A549 (cell line): ENCODE measurements at regions of chr19 and their contacts with region 1.

Region 1: GRCh38 chr19:47848823-47849473 is 10.1 kb upstream of the TPRX2 start:
- DNase-seq: peak; percentile 47 to 82
- ATAC-seq: peak; percentile 65 to 73; a peak in 5 of 6 replicates
- H3K4me3 ChIP-seq: peak overlapping the region; percentile 36
- H3K27ac ChIP-seq: peak overlapping the region in 1 of 2 experiments; percentile 80; a peak in 3 of 6 replicates
- H3K4me1 ChIP-seq: no peaks in the 10 kb centered on the region
- CTCF ChIP-seq: peak; percentile 97
- EP300 ChIP-seq: no peak
- POLR2A ChIP-seq: no peak
- RAD21 ChIP-seq: peak; percentile 32 to 33; a peak in 4 of 5 replicates

Region 2: DNA sequence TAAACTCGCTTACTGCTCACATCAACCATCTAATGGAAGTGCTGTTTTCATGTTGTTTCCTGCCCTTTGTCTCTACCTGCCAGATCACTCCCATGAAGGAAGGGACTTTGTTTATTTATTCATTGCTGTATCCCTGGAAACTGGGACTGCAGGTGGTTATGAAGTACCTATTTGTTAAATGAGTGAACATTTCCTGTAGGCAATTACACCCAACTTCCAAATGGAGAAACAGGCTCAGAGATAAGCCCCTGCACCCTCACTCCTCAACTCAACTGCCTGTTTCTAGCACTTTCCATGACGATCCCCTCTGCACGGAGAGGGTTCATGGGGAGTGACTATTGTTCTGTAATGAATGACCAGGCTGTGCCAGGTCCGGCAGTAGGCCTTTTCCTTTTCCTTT is 72.4 kb before region 1 on chr19:
- CTCF ChIA-PET with region 1: no interaction called
- POLR2A ChIA-PET with region 1: no interaction called
- DNase-seq: peak in 1 of 2 experiments; percentile 61
- ATAC-seq: no peak
- H3K4me3 ChIP-seq: no peak overlapping the region
- H3K27ac ChIP-seq: no peak overlapping the region
- H3K4me1 ChIP-seq: peaks cover 16% of the 10 kb centered on the region
- CTCF ChIP-seq: no peak
- EP300 ChIP-seq: no peak
- POLR2A ChIP-seq: no peak
- RAD21 ChIP-seq: no peak

Region 3: GRCh38 chr19:47813304-47814004 is 35.5 kb before region 1 on chr19:
- CTCF ChIA-PET with region 1: interaction called, 20 read pairs
- POLR2A ChIA-PET with region 1: no interaction called
- DNase-seq: peak; percentile 70 to 85
- ATAC-seq: peak; percentile 95 to 97
- H3K4me3 ChIP-seq: no peak overlapping the region
- H3K27ac ChIP-seq: no peak overlapping the region
- H3K4me1 ChIP-seq: no peaks in the 10 kb centered on the region; the same call in 2 of the 3 replicates
- CTCF ChIP-seq: peak; percentile 80
- EP300 ChIP-seq: no peak
- POLR2A ChIP-seq: no peak
- RAD21 ChIP-seq: peak; percentile 54 to 63

Region 4: GRCh38 chr19:47824396-47824795 is 24.6 kb before region 1 on chr19:
- CTCF ChIA-PET with region 1: interaction called, 25 read pairs
- POLR2A ChIA-PET with region 1: no interaction called
- DNase-seq: no peak
- ATAC-seq: peak in 1 of 2 experiments; percentile 26; a peak in 1 of 6 replicates
- H3K4me3 ChIP-seq: no peak overlapping the region
- H3K27ac ChIP-seq: no peak overlapping the region
- H3K4me1 ChIP-seq: no peaks in the 10 kb centered on the region
- CTCF ChIP-seq: no peak
- EP300 ChIP-seq: no peak
- POLR2A ChIP-seq: no peak
- RAD21 ChIP-seq: no peak